Endothelial cell of umbilical vein (primary cell): ENCODE measurements at regions of chr3 and their contacts with region 1.

Region 1: GRCh38 chr3:147816770-147817169 is 407.6 kb downstream of the ZIC1 start:
- DNase-seq: peak; percentile 91
- H3K4me3 ChIP-seq: no peak overlapping the region
- H3K27ac ChIP-seq: peak overlapping the region; percentile 28
- H3K4me1 ChIP-seq: peaks cover 25% of the 10 kb centered on the region
- H3K27me3 ChIP-seq: no peaks in the 10 kb centered on the region
- CTCF ChIP-seq: no peak
- POLR2A ChIP-seq: no peak

Region 2: DNA sequence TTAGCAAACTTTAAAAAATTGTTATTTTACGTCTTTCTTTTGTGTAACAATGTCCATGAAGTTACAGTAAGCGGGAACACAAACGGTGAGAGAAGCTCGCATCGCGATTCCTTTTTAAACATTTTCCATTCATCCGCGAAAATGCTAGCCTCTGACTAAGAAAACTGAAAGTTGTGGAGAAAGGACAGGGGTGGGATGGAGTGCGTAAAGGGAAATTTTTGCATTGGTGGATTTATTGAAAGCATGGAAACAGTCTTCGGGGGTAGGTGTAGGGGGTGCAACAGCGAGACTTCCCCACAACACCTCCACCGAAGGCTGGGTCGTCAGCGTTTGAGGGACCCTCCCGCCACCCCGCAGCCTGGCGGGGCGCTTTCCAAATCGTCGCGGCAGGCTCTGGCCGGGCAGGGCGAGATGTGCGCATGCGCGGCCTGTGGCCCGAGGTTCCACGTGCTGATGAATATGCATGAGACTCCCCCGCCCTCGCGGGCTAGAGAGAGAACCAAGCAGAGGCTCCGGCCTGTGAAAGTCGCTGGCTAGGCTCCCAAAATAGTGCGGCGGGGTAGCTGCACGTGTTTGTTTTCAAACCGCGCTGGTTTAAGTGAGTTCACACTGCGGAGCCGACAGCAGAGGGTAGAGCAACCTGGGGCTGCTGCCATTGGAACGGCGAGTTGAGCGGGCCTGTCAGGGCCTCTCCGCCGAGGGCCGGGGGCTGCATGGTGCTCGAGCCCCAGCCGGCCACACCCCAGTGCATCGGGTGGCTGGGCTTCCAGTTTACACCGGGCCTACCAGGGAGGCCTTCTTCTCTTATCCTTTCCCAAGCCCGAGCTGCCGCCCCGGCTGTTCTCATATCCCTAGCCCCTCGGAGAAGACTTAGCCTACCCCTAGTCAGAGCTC is 397.7 kb before region 1 on chr3:
- CTCF ChIA-PET with region 1: no interaction called
- POLR2A ChIA-PET with region 1: no interaction called
- dilution Hi-C with region 1: no loop called
- intact Hi-C with region 1: loop called (anchors 10 kb)
- DNase-seq: no peak
- H3K4me3 ChIP-seq: no peak overlapping the region
- H3K27ac ChIP-seq: no peak overlapping the region
- H3K4me1 ChIP-seq: peaks cover 4% of the 10 kb centered on the region
- H3K27me3 ChIP-seq: peaks cover 91 to 100% of the 10 kb centered on the region in 2 experiments
- CTCF ChIP-seq: no peak
- POLR2A ChIP-seq: no peak

Region 3: DNA sequence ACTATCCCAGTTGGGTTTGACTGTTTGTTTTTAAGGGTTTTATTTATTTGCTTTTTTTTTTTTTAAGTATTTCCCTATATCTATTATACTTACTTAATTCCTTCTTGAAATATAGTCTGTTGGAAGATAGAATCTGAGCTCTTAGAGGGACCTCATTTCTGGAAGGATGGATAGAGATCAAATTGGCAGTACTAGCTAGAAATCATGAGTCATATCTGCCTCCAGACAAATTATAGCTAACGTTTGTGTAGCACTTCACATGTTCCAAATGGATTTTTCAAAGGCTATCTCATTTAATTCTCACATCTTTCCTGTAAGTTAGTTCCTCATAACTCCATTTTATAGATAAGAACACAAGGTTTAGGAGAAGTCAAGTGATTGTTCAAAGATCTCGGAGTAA is 22.9 kb before region 1 on chr3:
- CTCF ChIA-PET with region 1: interaction called, 3 read pairs
- POLR2A ChIA-PET with region 1: no interaction called
- dilution Hi-C with region 1: no loop called
- intact Hi-C with region 1: loop called (anchors 2 kb)
- DNase-seq: peak; percentile 30
- H3K4me3 ChIP-seq: no peak overlapping the region
- H3K27ac ChIP-seq: no peak overlapping the region
- H3K4me1 ChIP-seq: peaks cover 6% of the 10 kb centered on the region
- H3K27me3 ChIP-seq: no peaks in the 10 kb centered on the region
- CTCF ChIP-seq: no peak
- POLR2A ChIP-seq: no peak

Region 4: DNA sequence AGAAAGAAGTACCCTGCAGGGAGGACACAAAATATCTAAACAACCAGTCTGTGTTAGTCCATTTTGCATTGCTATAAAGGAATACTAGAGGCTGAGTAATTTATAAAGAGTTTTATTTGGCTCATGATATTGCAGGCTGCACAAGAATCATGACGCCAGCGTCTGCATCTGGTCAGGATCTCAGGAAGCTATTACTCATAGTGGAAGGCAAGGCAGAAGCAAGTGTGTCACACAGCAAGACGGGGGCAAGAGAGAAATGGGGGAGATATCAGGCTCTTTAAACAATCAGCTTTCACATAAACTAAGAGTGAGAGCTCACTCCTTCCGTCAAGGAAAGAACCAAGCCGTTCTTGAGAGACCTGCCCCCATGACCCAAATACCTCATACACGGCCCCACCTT is 207.2 kb after region 1 on chr3:
- CTCF ChIA-PET with region 1: no interaction called
- POLR2A ChIA-PET with region 1: no interaction called
- dilution Hi-C with region 1: no loop called
- intact Hi-C with region 1: loop called (anchors 5 kb)
- DNase-seq: peak; percentile 92
- H3K4me3 ChIP-seq: no peak overlapping the region
- H3K27ac ChIP-seq: peak overlapping the region; percentile 80
- H3K4me1 ChIP-seq: peaks cover 17% of the 10 kb centered on the region
- H3K27me3 ChIP-seq: no peaks in the 10 kb centered on the region
- CTCF ChIP-seq: no peak
- POLR2A ChIP-seq: no peak